Sciatic nerve (tissue), 2 donors: ENCODE measurements at regions of chr4 and their contacts with region 1.

Region 1: GRCh38 chr4:15400981-15401671 is 26.7 kb upstream of the C1QTNF7 start:
- DNase-seq: peak; percentile 71
- ATAC-seq: peak; percentile 94

Region 2: DNA sequence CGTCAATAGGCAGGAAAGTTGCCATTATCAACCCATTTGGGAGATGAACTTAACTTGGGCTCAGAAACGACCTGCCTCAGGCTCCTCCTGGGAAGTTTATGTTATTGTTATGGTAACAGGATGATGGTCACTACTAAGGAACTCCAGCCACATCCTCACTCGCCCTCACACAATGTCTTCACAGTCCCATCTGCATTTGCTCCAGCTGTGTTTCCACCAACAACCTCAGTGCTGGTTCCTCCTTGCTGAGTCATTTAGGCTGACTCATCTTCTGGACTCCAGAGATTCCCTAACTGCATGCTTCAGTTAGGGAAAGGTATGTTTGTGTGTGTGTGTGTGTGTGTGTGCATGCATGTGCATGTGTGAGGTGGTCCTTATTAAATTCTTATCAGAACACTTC is 1480.2 kb before region 1 on chr4:
- intact Hi-C with region 1: loop called (anchors 10 kb)
- DNase-seq: no peak
- ATAC-seq: peak; percentile 87

Region 3: DNA sequence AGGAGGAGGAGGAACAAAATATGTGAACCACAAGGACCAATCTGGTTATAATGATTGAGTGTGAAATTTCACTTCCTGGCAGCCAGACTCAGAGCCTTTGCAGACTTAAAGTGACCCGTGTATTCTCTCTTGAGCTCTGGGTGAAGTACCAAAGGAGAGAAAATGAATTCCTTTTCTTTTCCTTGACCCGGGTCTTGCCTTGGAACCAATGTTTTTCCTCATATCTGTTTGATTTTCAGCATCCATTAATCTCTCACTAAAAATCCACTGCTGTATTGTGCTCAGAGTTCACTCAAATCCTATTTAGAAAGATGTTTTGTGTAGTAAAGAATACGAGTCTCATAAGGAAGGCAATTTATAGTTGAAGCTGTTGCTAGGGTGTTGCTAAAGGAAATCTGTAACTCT is 51.6 kb before region 1 on chr4:
- intact Hi-C with region 1: no loop called
- DNase-seq: no peak
- ATAC-seq: peak; percentile 50